Prostate gland (tissue), 2 donors: ENCODE measurements at regions of chr4 and their contacts with region 1.

Region 1: GRCh38 chr4:89914609-89915550 is 20.2 kb downstream of the MMRN1 start:
- DNase-seq: no peak
- H3K4me3 ChIP-seq: no peak overlapping the region
- H3K27ac ChIP-seq: no peak overlapping the region
- H3K4me1 ChIP-seq: peaks cover 3% of the 10 kb centered on the region
- H3K27me3 ChIP-seq: no peaks in the 10 kb centered on the region
- CTCF ChIP-seq: peak in 1 of 4 experiments; percentile 16
- POLR2A ChIP-seq: no peak

Region 2: GRCh38 chr4:89610236-89610635 is 304.6 kb before region 1 on chr4:
- intact Hi-C with region 1: no loop called
- DNase-seq: no peak
- H3K4me3 ChIP-seq: no peak overlapping the region
- H3K27ac ChIP-seq: no peak overlapping the region
- H3K4me1 ChIP-seq: no peaks in the 10 kb centered on the region
- H3K27me3 ChIP-seq: no peaks in the 10 kb centered on the region
- CTCF ChIP-seq: no peak
- POLR2A ChIP-seq: no peak

Region 3: GRCh38 chr4:90174611-90175133 is 259.8 kb after region 1 on chr4:
- intact Hi-C with region 1: no loop called
- DNase-seq: no peak
- H3K4me3 ChIP-seq: no peak overlapping the region
- H3K27ac ChIP-seq: no peak overlapping the region
- H3K4me1 ChIP-seq: no peaks in the 10 kb centered on the region
- H3K27me3 ChIP-seq: no peaks in the 10 kb centered on the region
- CTCF ChIP-seq: no peak
- POLR2A ChIP-seq: no peak

Region 4: GRCh38 chr4:90293320-90293719 is 378.4 kb after region 1 on chr4:
- intact Hi-C with region 1: loop called (anchors 10 kb)
- DNase-seq: no peak
- H3K4me3 ChIP-seq: no peak overlapping the region
- H3K27ac ChIP-seq: no peak overlapping the region
- H3K4me1 ChIP-seq: no peaks in the 10 kb centered on the region
- H3K27me3 ChIP-seq: no peaks in the 10 kb centered on the region
- CTCF ChIP-seq: peak in 2 of 4 experiments; percentile 34 to 53
- POLR2A ChIP-seq: no peak